ENCODE measurements at regions of chr15 and their contacts with region 1.

Region 1: DNA sequence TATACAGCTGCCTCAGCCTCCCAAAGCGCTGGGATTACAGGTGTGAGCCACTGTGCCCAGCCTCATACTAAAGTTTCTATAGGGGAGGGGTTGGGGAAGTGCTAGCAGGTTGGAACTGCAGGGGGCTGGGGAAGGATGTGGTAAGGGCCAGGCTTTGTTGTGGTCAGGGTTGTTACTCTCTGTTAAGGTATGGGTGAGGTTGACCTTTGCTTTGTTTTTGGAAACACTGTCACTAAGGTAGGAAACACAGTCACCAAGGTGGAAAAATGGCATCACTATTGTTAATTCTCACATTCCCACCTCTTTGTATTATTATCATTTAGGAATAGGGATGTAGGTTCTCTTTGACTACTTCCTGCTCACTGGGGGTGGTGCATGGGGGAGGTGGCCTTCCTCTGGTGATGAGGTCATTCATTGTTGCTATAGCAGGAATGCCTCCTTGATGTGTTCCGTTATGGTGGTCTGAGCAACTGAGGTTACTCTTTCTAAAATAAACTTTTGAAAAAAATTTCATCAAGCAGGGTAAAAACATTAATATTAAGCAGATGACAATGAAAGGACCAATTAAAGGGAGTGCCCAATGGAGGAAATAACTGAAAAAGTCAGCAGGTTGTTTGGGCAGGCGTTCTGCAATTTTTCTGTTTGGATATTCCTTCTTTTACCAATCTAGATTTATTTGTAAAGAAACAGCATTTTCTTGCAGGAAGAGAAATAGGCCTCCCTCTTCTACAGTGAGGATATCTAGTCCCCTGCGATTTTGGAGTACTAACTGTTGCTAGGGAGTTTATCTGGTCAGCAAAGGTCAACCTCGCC is 150.5 kb downstream of the WDR76 start:
- DNase-seq: peak; percentile 60
- H3K4me3 Mint-ChIP-seq: no peak overlapping the region
- H3K27ac Mint-ChIP-seq: peak overlapping the region; percentile 21
- H3K4me1 Mint-ChIP-seq: peaks cover 26% of the 10 kb centered on the region
- H3K27me3 Mint-ChIP-seq: peaks cover 18% of the 10 kb centered on the region

Region 2: GRCh38 chr15:43429687-43430086 is 547.6 kb before region 1 on chr15:
- intact Hi-C with region 1: no loop called
- DNase-seq: no peak
- H3K4me3 Mint-ChIP-seq: no peak overlapping the region
- H3K27ac Mint-ChIP-seq: no peak overlapping the region
- H3K4me1 Mint-ChIP-seq: no peaks in the 10 kb centered on the region
- H3K27me3 Mint-ChIP-seq: no peaks in the 10 kb centered on the region

Region 3: DNA sequence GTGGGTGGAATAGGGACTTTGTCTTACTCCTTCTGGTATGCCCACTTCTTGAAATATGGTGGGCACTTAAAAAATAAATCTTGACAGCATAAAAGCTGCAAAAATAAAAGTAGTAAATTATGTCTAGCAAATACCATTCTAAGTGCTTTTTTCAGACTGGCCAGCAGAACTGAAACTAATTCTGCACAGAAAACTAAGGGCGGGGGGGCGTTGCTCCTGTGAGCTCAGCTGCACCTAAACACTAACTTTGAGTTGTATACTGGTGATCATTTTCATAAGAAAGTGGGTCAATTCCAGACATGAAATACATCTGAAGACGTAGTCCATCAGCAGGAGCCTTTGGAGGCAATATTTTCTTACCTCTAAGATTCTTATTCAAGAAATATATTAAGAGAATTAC is 35.7 kb before region 1 on chr15:
- intact Hi-C with region 1: loop called (anchors 5 kb)
- DNase-seq: no peak
- H3K4me3 Mint-ChIP-seq: no peak overlapping the region
- H3K27ac Mint-ChIP-seq: no peak overlapping the region
- H3K4me1 Mint-ChIP-seq: peaks cover 1% of the 10 kb centered on the region
- H3K27me3 Mint-ChIP-seq: peaks cover 12% of the 10 kb centered on the region

Region 4: DNA sequence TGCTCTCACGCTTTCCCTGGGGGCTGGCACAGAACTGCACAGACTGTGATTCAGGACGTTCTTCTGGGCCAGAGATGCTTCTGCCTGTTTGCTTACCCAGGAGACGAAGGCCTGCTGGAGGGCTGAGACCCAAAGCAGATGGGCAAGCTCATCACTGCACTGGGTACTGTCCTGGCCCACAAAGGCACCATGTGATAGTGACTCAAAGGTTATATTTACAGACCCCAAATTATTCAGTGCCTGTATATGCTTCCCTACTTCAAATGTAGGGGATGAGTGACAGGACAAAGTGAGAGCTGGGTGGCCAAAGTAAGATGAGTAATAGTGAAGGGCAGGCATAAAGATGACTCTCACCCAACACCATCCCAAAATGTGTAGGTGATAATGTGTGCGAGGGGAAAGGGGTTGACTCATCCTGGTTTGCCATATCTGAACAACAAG is 23.1 kb before region 1 on chr15:
- intact Hi-C with region 1: loop called (anchors 1 kb)
- DNase-seq: no peak
- H3K4me3 Mint-ChIP-seq: no peak overlapping the region
- H3K27ac Mint-ChIP-seq: peak overlapping the region; percentile 78
- H3K4me1 Mint-ChIP-seq: peaks cover 30% of the 10 kb centered on the region
- H3K27me3 Mint-ChIP-seq: peaks cover 9% of the 10 kb centered on the region

Region 5: DNA sequence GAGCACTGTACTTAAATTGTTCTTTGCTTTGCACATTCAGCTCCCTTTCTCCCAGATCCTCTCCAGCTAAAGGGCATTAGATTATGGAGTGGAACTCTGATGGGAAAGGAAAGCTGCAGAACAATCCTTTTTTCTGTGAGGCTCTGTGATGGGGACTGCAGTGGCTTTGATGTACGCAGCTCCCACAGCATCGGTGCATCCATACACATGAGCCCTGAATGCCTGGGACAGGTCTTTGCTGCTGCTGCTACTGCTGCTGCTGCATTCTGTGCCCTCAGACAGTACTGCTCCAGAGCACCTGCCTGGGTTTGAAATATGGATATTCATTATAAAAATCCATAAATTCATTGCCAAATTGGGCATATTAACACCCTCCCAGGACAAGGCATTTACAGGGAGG is 13.9 kb after region 1 on chr15:
- intact Hi-C with region 1: no loop called
- DNase-seq: no peak
- H3K4me3 Mint-ChIP-seq: no peak overlapping the region
- H3K27ac Mint-ChIP-seq: no peak overlapping the region
- H3K4me1 Mint-ChIP-seq: no peaks in the 10 kb centered on the region
- H3K27me3 Mint-ChIP-seq: peaks cover 12% of the 10 kb centered on the region

Region 6: DNA sequence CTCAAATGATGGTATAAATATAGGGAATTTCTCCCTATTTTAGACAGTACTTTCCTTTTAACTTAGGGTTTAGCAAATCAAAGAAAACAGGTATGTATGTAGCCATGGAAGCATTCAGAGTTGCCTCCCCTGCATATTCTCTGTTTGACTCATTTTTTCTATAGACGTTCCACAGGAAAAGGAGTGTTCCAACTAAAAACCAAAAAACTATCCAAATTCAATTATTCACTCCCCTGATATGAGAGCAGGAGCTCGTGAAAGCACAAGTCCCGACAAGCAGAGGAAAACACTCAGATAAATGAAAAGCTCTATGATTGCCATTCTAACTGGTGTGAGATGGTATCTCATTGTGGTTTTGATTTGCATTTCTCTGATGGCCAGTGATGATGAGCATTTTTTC is 98.3 kb after region 1 on chr15:
- intact Hi-C with region 1: no loop called
- DNase-seq: no peak
- H3K4me3 Mint-ChIP-seq: no peak overlapping the region
- H3K27ac Mint-ChIP-seq: no peak overlapping the region
- H3K4me1 Mint-ChIP-seq: no peaks in the 10 kb centered on the region
- H3K27me3 Mint-ChIP-seq: peaks cover 35% of the 10 kb centered on the region

Measured in activated T-helper 2 cell treated with anti-CD3 and anti-CD28 coated beads, Interferon-gamma antibody, Interleukin-2, Interleukin-4, amounts not matched to agents 10 μg/mL and 5 μg/mL and 100 μg/mL, durations not matched to agents 14 hours and 24 hours and 36 hours (primary cell).